Activated CD4-positive, alpha-beta T cell treated with anti-CD3 and anti-CD28 coated beads, Interleukin-2, amount 10 ng/mL, durations not matched to agents 7 days and 5 days (primary cell): ENCODE measurements at regions of chr22 and their contacts with region 1.

Region 1: GRCh38 chr22:32796865-32797573 is 4.5 kb upstream of the TIMP3 start:
- DNase-seq: peak; percentile 63
- H3K4me3 Mint-ChIP-seq: no peak overlapping the region
- H3K27ac Mint-ChIP-seq: no peak overlapping the region
- H3K4me1 Mint-ChIP-seq: peaks cover 2% of the 10 kb centered on the region
- H3K27me3 Mint-ChIP-seq: peaks cover 33% of the 10 kb centered on the region

Region 2: GRCh38 chr22:32528984-32529982 is 267.7 kb before region 1 on chr22:
- CTCF ChIA-PET with region 1: interaction called, 19 read pairs
- POLR2A ChIA-PET with region 1: no interaction called
- DNase-seq: peak; percentile 72
- H3K4me3 Mint-ChIP-seq: no peak overlapping the region
- H3K27ac Mint-ChIP-seq: no peak overlapping the region
- H3K4me1 Mint-ChIP-seq: no peaks in the 10 kb centered on the region
- H3K27me3 Mint-ChIP-seq: no peaks in the 10 kb centered on the region

Region 3: DNA sequence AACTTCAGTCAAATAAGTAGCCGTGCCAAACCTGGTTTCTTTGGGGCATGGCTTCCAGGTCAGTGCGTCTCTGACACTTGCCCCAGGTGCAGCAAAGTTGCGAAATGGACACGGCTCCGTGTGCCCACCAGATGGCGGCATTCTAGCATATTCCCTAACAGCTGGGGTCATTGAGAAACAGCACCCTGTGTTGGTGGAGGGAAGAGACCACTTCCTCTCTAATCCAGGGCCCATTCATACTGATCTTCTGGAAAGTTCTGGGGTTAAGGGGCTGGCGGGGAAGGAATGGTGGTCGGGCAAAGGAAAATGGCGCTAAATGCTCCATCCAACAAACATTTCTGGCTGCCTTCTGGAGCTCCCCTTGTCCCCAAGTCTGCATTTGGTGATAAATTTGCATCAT is 136.7 kb before region 1 on chr22:
- CTCF ChIA-PET with region 1: interaction called, 15 read pairs
- POLR2A ChIA-PET with region 1: no interaction called
- DNase-seq: peak; percentile 66
- H3K4me3 Mint-ChIP-seq: no peak overlapping the region
- H3K27ac Mint-ChIP-seq: no peak overlapping the region
- H3K4me1 Mint-ChIP-seq: no peaks in the 10 kb centered on the region
- H3K27me3 Mint-ChIP-seq: peaks cover 10% of the 10 kb centered on the region